Psoas muscle (tissue), 8 donors: ENCODE measurements at regions of chr6 and their contacts with region 1.

Region 1: DNA sequence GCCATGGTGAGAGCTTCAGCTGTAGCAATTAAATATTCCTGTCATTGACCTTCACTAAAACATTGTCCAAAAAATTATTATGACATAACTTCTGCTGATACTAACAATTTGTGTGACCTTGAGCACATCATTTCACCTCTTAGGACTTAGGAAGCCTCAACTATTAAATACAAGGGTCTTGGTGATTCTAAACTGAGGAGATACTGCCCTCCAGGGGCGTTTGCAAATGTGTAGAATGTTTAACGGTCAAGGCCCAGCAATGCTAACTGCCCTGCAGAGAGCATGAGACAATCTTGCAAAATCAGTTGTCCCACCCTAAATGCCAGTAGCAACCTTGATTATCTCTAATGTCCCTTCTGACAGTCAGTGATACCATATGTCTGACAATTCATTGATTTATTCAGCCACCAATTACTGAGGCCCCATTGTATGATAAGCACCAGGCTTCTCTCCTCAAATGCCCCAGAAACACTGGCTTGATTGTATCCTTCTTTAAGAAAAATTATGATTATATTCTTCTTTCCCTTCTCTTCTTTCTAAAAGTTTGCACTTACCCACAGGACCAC is 284.1 kb upstream of the PLN start:
- DNase-seq: no peak
- ATAC-seq: peak; percentile 52 to 83 (median 67)
- H3K4me3 ChIP-seq: no peak overlapping the region
- H3K27ac ChIP-seq: no peak overlapping the region
- H3K4me1 ChIP-seq: no peaks in the 10 kb centered on the region
- H3K27me3 ChIP-seq: no peaks in the 10 kb centered on the region
- CTCF ChIP-seq: peak; percentile 60

Region 2: GRCh38 chr6:117976030-117976651 is 287.9 kb before region 1 on chr6:
- intact Hi-C with region 1: loop called (anchors 2 to 5 kb)
- DNase-seq: no peak
- ATAC-seq: peak in 2 of 4 donors; percentile 59 to 65
- H3K4me3 ChIP-seq: no peak overlapping the region
- H3K27ac ChIP-seq: no peak overlapping the region
- H3K4me1 ChIP-seq: no peaks in the 10 kb centered on the region
- H3K27me3 ChIP-seq: no peaks in the 10 kb centered on the region
- CTCF ChIP-seq: peak; percentile 59

Region 3: GRCh38 chr6:118787724-118788423 is 523.9 kb after region 1 on chr6:
- intact Hi-C with region 1: no loop called
- DNase-seq: no peak
- ATAC-seq: peak in 3 of 4 donors; percentile 37 to 51 (median 42)
- H3K4me3 ChIP-seq: no peak overlapping the region
- H3K27ac ChIP-seq: no peak overlapping the region
- H3K4me1 ChIP-seq: no peaks in the 10 kb centered on the region
- H3K27me3 ChIP-seq: no peaks in the 10 kb centered on the region
- CTCF ChIP-seq: no peak